OCI-LY7 (cell line): ENCODE measurements at regions of chrX and their contacts with region 1.

Region 1: GRCh38 chrX:107776649-107777535 is 641 bp upstream of the NCBP2L start:
- DNase-seq: peak; percentile 83
- H3K4me3 ChIP-seq: peak overlapping the region; percentile 58
- H3K27ac ChIP-seq: no peak overlapping the region
- H3K4me1 ChIP-seq: peaks cover 11% of the 10 kb centered on the region
- CTCF ChIP-seq: peak; percentile 77

Region 2: DNA sequence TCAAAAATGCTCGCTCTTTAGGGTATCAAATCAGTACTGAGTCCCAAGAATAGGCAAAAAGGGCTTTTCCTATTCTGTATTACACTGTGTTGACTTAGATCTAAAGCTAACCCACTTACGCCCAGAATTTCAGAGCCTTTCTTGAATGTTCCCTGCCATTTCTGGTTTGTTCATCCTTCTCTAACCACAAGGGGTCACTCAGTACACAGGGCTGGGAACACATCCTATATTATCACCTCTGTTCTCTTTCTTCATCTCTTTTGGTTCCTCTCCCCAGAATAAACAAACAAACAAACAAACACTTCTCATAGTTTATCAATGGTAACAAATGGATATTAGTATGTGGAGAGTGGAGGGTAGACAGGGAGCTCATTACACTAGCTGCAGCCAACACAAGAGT is 751.3 kb before region 1 on chrX:
- CTCF ChIA-PET with region 1: no interaction called
- POLR2A ChIA-PET with region 1: no interaction called
- intact Hi-C with region 1: loop called (anchors 10 kb)
- DNase-seq: peak; percentile 31
- H3K4me3 ChIP-seq: no peak overlapping the region
- H3K27ac ChIP-seq: no peak overlapping the region
- H3K4me1 ChIP-seq: no peaks in the 10 kb centered on the region
- CTCF ChIP-seq: peak; percentile 76

Region 3: GRCh38 chrX:107672955-107673378 is 103.9 kb before region 1 on chrX:
- CTCF ChIA-PET with region 1: interaction called, 9 read pairs
- POLR2A ChIA-PET with region 1: interaction called, 5 read pairs
- intact Hi-C with region 1: loop called (anchors 1 kb)
- DNase-seq: peak; percentile 83
- H3K4me3 ChIP-seq: peak overlapping the region; percentile 88
- H3K27ac ChIP-seq: peak overlapping the region; percentile 89
- H3K4me1 ChIP-seq: peaks cover 45% of the 10 kb centered on the region
- CTCF ChIP-seq: peak; percentile 73

Region 4: GRCh38 chrX:107716816-107717700 is 59.8 kb before region 1 on chrX:
- CTCF ChIA-PET with region 1: no interaction called
- POLR2A ChIA-PET with region 1: interaction called, 3 read pairs
- intact Hi-C with region 1: loop called (anchors 2 kb)
- DNase-seq: peak; percentile 87
- H3K4me3 ChIP-seq: peak overlapping the region; percentile 91
- H3K27ac ChIP-seq: peak overlapping the region; percentile 85
- H3K4me1 ChIP-seq: peaks cover 59% of the 10 kb centered on the region
- CTCF ChIP-seq: no peak

Region 5: GRCh38 chrX:107894038-107894437 is 117.1 kb after region 1 on chrX:
- CTCF ChIA-PET with region 1: no interaction called
- POLR2A ChIA-PET with region 1: no interaction called
- intact Hi-C with region 1: loop called (anchors 5 kb)
- DNase-seq: peak; percentile 65
- H3K4me3 ChIP-seq: no peak overlapping the region
- H3K27ac ChIP-seq: no peak overlapping the region
- H3K4me1 ChIP-seq: no peaks in the 10 kb centered on the region
- CTCF ChIP-seq: peak; percentile 77

Region 6: GRCh38 chrX:108070891-108071290 is 294.0 kb after region 1 on chrX:
- CTCF ChIA-PET with region 1: no interaction called
- POLR2A ChIA-PET with region 1: no interaction called
- intact Hi-C with region 1: loop called (anchors 10 kb)
- DNase-seq: no peak
- H3K4me3 ChIP-seq: no peak overlapping the region
- H3K27ac ChIP-seq: no peak overlapping the region
- H3K4me1 ChIP-seq: no peaks in the 10 kb centered on the region
- CTCF ChIP-seq: no peak